ENCODE measurements at regions of chr19 and their contacts with region 1.

Region 1: GRCh38 chr19:29263305-29264135 is 50.6 kb upstream of the UQCRFS1 start:
- DNase-seq: peak; percentile 75
- ATAC-seq: peak; percentile 39
- H3K4me3 Mint-ChIP-seq: no peak overlapping the region
- H3K27ac Mint-ChIP-seq: no peak overlapping the region
- H3K4me1 Mint-ChIP-seq: no peaks in the 10 kb centered on the region
- H3K27me3 Mint-ChIP-seq: peaks cover 22% of the 10 kb centered on the region

Region 2: GRCh38 chr19:28737021-28737895 is 526.3 kb before region 1 on chr19:
- CTCF ChIA-PET with region 1: interaction called, 4 read pairs
- POLR2A ChIA-PET with region 1: no interaction called
- intact Hi-C with region 1: loop called (anchors 1 to 5 kb)
- DNase-seq: peak; percentile 25
- ATAC-seq: peak; percentile 75
- H3K4me3 Mint-ChIP-seq: no peak overlapping the region
- H3K27ac Mint-ChIP-seq: no peak overlapping the region
- H3K4me1 Mint-ChIP-seq: peaks cover 4% of the 10 kb centered on the region
- H3K27me3 Mint-ChIP-seq: peaks cover 2% of the 10 kb centered on the region

Region 3: GRCh38 chr19:29084266-29084665 is 179.3 kb before region 1 on chr19:
- CTCF ChIA-PET with region 1: interaction called, 4 read pairs
- POLR2A ChIA-PET with region 1: no interaction called
- intact Hi-C with region 1: loop called in 1 of 2 experiments (anchors 10 kb)
- DNase-seq: peak; percentile 17
- ATAC-seq: no peak
- H3K4me3 Mint-ChIP-seq: no peak overlapping the region
- H3K27ac Mint-ChIP-seq: no peak overlapping the region
- H3K4me1 Mint-ChIP-seq: no peaks in the 10 kb centered on the region
- H3K27me3 Mint-ChIP-seq: no peaks in the 10 kb centered on the region

Region 4: DNA sequence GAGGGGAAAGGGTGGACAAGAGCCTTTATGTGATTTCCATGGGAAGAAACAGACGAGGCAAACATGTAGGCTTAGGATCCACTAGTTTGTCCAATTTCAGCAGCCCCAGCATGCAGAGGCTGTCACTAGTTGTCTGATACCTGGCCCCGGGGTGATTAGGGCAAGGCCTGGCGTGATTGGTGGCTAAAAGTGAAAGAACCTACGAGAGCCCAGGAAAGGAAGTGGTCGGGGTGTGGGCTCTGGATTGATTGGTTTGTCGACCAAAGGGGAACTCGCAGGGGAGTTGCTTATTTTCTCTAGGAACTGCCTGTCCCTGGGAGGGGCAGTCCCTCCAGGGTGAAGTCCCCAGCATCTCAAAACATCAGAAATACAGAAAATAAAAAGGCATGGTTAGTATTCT is 13.6 kb after region 1 on chr19:
- CTCF ChIA-PET with region 1: interaction called, 15 read pairs
- POLR2A ChIA-PET with region 1: no interaction called
- intact Hi-C with region 1: no loop called
- DNase-seq: peak; percentile 76
- ATAC-seq: peak; percentile 100
- H3K4me3 Mint-ChIP-seq: no peak overlapping the region
- H3K27ac Mint-ChIP-seq: peak overlapping the region; percentile 33
- H3K4me1 Mint-ChIP-seq: peaks cover 10% of the 10 kb centered on the region
- H3K27me3 Mint-ChIP-seq: peaks cover 18% of the 10 kb centered on the region

Region 5: DNA sequence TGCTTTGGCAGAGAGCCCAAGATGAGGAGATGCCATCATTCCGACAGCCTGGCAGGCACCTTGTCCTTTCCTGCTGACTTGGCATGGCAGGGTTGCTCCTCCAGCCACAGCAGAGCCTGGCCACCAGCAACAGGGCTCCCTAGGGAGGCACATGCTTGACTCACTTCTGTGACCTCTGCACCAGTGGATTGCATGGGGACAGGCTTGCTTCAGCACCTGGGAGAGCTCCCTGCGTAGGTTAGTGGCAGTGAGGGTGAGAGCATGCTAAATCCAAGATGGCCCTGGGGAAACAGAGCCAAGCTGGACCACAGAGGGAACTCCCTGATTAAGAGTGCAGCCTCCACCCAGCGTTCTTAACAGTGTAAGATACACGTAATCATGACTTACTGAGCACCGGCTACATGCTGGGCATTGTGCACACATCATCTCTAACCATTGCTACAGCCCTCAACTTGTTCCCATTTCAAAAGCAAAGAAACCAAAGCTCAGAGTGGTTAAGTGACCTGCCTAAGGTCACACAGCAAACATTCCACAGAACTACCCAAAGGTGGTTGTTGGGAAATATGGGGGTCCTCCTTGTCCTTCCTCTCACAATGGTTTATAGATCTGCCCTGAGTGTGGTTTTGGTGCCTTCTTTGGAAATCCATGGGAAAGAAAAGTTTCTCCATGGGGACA is 66.1 kb after region 1 on chr19:
- CTCF ChIA-PET with region 1: no interaction called
- POLR2A ChIA-PET with region 1: no interaction called
- intact Hi-C with region 1: no loop called
- DNase-seq: peak; percentile 38
- ATAC-seq: no peak
- H3K4me3 Mint-ChIP-seq: no peak overlapping the region
- H3K27ac Mint-ChIP-seq: no peak overlapping the region
- H3K4me1 Mint-ChIP-seq: no peaks in the 10 kb centered on the region
- H3K27me3 Mint-ChIP-seq: peaks cover 5% of the 10 kb centered on the region

Measured in activated CD4-positive, alpha-beta T cell treated with anti-CD3 and anti-CD28 coated beads for 36 hours (primary cell).